Right ventricle myocardium inferior (tissue), 1 donor: ENCODE measurements at regions of chr16 and their contacts with region 1.

Region 1: DNA sequence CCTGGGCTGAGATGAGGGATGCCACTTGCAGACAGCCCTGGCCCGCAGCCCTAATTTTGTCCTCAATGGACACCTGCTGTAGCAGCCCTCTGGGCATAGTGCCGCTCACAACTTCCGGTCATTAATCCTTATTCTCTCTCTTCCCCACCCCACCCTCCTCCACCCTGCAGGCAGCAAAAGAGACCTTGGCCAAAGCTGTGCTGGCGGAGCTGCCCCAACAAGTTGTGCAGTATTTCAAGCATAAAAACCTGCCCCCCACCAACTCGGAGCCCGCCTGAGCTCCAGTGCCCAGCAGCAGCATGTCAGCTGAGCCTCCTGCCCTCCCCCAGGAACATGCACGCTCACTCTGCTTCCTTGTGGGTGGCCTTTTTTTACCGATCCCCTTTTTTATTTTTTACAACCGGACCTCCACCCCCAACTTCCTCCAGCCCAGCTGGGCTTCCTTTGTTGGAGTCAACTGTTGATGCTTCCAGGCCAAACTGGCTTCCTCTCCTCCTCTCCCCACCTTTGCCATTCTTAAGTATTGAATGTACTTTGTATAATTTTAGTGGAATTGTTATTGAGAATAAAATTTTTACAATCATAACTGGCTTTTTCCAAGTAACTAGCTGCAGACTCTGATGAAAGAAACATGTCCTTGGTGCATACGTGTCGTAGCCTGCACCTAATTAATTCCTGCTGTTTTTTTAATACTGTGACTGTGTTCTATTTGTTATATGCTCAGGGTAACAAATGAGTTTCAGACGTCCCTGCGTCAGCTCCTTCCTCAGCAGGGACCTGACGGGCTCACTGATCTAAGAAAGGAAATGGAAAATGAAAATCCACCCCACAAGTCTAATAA is 38.2 kb downstream of the PSME3IP1 start:
- DNase-seq: no peak
- ATAC-seq: no peak

Region 2: DNA sequence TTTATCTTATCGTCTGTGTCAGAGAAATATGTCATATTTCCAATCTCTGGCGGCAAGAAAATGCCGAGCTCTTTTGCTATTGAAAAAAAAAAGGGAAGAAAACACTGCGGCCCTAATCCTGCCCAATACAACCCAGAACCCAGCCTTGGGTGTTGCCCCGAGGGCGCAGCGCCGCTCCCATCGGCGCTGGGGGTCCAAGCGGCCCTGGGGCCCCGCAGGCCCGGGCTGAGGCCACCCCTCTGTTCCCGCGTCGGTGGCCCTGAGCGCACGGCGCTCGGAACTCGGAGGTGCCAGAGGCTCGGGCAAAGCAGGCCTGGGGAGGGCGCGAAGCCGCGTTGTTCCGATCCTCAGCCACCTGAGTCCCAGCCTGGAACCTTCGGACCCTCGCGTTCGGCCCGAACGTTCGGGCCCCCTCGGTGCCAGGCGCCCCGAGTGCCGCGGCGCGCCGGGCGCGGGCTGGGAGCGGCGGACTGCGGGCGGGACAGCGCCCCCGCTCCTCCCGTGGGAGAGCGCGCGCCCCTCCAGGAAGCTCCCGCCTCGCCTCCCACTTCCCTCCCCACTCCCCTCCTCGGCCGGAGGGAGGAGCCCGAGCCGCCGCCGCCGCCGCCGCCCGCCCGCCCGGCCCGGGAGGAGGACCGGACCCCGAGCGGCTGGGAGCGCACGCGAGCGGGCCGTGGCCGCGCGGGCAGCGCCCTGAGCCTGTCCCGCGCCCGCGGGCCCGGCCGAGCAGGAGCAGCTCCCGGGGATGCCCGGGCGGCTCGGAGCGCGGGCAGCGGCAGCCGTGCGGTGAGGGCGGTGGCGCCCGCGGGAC is 55.4 kb before region 1 on chr16 and contains the start of gene CPNE2:
- intact Hi-C with region 1: loop called (anchors 5 kb)
- DNase-seq: peak; percentile 81
- ATAC-seq: peak; percentile 86
- total RNA-seq, gene CPNE2: 14.6 TPM

Region 3: DNA sequence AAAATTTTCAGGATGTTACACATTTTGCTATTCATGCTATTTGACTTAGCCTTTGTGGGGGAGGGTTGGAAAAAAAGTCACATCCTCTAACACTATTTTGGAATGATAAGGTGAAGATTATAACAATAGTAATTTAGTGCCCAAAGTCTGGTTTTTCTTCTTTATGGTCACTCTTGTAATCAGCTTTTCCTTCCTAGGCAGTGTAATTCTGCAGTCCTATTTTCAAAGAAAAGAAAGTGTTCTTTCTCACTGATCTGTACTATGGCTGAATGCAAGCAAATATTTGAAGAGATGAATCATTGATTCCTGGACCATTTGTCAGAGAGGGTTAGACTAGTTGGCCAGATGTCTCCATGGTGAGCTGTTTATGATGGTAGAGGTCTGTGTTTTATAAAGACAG is 46.9 kb after region 1 on chr16:
- intact Hi-C with region 1: no loop called
- DNase-seq: no peak
- ATAC-seq: no peak